A549 (cell line): ENCODE measurements at regions of chr2 and their contacts with region 1.

Region 1: GRCh38 chr2:190979906-190980629 is 33.9 kb downstream of the STAT1 start:
- DNase-seq: no peak
- ATAC-seq: no peak; a peak in 1 of 6 replicates
- H3K4me3 ChIP-seq: no peak overlapping the region
- H3K27ac ChIP-seq: 0 out of 6 replicates have a peak overlapping the region, but pooled peaks of 1 of the 2 experiments have one; percentile 4
- H3K4me1 ChIP-seq: 0 out of 3 replicates have a peak, but pooled peaks cover 3% of the 10 kb centered on the region
- CTCF ChIP-seq: no peak
- EP300 ChIP-seq: no peak
- POLR2A ChIP-seq: no peak
- RAD21 ChIP-seq: no peak

Region 2: DNA sequence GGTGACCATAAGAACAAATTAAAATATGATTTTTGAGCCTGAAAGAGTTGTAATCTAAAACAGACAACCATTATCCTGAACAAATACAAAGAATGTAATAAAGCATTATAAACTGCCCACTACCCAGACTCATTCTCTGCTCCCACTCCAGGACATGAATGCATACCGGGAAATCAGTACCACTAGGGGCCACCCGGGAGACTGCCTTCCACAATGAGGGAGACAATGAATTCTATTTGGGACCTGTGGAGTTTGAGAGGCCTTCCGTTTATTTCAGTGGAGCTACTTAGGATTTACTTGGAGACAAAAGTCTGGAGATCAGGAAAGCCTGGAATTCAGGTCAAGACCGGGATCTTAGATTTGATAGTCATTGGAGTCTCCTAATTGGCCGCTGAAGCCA is 281.2 kb before region 1 on chr2:
- CTCF ChIA-PET with region 1: no interaction called
- POLR2A ChIA-PET with region 1: no interaction called
- DNase-seq: peak in 1 of 2 experiments; percentile 18
- ATAC-seq: peak; percentile 52 to 69; a peak in 4 of 6 replicates
- H3K4me3 ChIP-seq: no peak overlapping the region
- H3K27ac ChIP-seq: no peak overlapping the region
- H3K4me1 ChIP-seq: no peaks in the 10 kb centered on the region
- CTCF ChIP-seq: no peak
- EP300 ChIP-seq: no peak
- POLR2A ChIP-seq: no peak
- RAD21 ChIP-seq: 0 out of 5 replicates have a peak, but pooled peaks of 1 of the 2 experiments have one; percentile 12

Region 3: DNA sequence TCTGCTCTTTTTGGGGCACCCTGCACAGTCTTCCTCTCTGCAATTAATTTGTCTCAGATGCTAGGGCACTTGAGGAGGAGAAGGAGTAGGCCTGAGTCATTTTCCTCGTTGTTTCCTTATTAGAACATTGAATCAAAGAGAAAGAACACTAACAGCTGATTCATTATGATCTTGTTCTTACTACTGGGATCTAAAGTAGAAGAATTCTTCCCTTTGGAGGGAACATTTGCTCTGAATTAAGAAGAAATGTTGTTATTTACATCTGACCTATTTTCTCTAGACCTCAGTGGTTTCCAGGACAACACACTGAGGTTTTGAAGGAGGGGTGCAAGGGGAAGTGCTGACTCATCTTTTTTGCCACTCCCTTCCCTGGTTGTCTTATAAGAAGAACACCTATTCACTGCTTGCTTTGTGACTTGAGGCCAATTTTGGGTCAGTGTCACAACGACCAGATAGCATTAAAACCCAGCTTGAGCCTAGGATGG is 58.2 kb after region 1 on chr2:
- CTCF ChIA-PET with region 1: no interaction called
- POLR2A ChIA-PET with region 1: interaction called, 12 read pairs
- DNase-seq: peak in 1 of 2 experiments; percentile 68
- ATAC-seq: 0 out of 6 replicates have a peak, but pooled peaks of 1 of the 2 experiments have one; percentile 11
- H3K4me3 ChIP-seq: no peak overlapping the region
- H3K27ac ChIP-seq: peak overlapping the region; percentile 73 to 92
- H3K4me1 ChIP-seq: peaks cover 60% of the 10 kb centered on the region
- CTCF ChIP-seq: no peak
- EP300 ChIP-seq: no peak
- POLR2A ChIP-seq: no peak
- RAD21 ChIP-seq: no peak